Activated CD8-positive, alpha-beta T cell treated with anti-CD3 and anti-CD28 coated beads, Interleukin-2, amount 10 ng/mL, durations not matched to agents 7 days and 5 days (primary cell): ENCODE measurements at regions of chr1 and their contacts with region 1.

Region 1: DNA sequence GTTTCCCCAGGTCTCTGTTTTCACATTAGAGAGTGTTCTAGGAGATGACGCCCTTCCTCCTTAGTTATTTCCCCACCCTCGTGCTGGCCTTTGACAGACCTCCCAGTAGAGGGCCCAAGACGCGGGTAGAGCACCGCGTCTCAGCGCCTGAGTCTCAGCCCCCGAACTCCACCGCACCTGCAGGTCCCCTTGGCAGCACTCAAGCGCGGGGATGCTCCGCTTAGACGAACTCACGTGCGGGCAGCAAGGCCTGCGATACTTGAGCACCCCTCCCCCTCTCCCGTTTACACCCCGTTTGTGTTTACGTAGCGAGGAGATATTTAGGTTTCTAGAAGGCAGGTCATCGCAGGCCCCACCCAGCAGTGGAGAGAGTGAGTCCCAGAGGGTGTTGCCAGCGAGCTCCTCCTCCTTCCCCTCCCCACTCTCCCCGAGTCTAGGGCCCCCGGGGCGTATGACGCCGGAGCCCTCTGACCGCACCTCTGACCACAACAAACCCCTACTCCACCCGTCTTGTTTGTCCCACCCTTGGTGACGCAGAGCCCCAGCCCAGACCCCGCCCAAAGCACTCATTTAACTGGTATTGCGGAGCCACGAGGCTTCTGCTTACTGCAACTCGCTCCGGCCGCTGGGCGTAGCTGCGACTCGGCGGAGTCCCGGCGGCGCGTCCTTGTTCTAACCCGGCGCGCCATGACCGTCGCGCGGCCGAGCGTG is at the start of gene CD55:
- DNase-seq: peak; percentile 100
- ATAC-seq: peak; percentile 93
- H3K4me3 Mint-ChIP-seq: peak within 1 kb of the TSS; percentile 92
- H3K27ac Mint-ChIP-seq: peak within 1 kb of the TSS; percentile 99
- H3K4me1 Mint-ChIP-seq: peaks cover 29% of the 10 kb centered on the region
- H3K27me3 Mint-ChIP-seq: no peaks in the 10 kb centered on the region
- total RNA-seq, gene CD55: 82.1 to 85.5 TPM

Region 2: DNA sequence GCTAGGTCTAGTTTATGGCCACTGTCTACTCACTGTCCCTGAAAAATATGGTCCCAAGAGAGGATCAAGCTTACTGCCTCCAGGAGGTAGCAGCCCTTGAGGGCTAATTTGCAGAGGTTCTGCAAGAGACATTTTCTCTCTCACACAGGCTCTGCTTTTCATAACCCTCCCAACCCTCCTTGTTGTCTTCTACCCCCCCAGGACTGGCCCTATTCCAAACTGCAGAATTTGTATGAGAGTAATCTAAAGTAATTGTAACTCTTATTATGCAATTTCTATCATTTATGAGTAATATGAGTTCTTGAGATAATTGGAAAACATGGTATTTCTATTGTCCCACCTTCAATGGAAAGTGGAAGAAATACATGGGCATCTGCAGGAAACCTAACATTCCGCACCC is 70.2 kb before region 1 on chr1:
- CTCF ChIA-PET with region 1: no interaction called
- POLR2A ChIA-PET with region 1: no interaction called
- DNase-seq: no peak
- ATAC-seq: no peak
- H3K4me3 Mint-ChIP-seq: no peak overlapping the region
- H3K27ac Mint-ChIP-seq: no peak overlapping the region
- H3K4me1 Mint-ChIP-seq: peaks cover 10% of the 10 kb centered on the region
- H3K27me3 Mint-ChIP-seq: no peaks in the 10 kb centered on the region

Region 3: DNA sequence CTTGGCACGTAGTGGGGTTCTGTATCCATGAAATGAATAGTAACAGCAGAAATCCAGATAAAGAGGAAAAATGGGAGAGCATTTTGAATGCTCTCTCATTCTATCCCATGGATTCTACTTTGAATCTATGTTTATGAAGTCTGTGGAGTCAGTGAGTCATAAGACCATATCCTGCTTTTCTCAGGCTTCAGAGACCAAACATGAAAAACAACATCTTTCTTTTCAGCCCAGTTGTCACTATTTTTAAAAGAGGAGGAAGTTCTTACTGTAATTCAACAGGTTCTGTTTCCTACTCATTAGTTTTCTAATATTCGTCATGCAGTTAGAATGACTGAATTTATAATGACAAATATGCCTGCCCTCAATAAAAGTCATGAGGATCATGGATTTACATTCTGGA is 39.2 kb before region 1 on chr1:
- CTCF ChIA-PET with region 1: no interaction called
- POLR2A ChIA-PET with region 1: interaction called, 11 read pairs
- DNase-seq: no peak
- ATAC-seq: no peak
- H3K4me3 Mint-ChIP-seq: no peak overlapping the region
- H3K27ac Mint-ChIP-seq: peak overlapping the region; percentile 44
- H3K4me1 Mint-ChIP-seq: peaks cover 75% of the 10 kb centered on the region
- H3K27me3 Mint-ChIP-seq: no peaks in the 10 kb centered on the region

Region 4: DNA sequence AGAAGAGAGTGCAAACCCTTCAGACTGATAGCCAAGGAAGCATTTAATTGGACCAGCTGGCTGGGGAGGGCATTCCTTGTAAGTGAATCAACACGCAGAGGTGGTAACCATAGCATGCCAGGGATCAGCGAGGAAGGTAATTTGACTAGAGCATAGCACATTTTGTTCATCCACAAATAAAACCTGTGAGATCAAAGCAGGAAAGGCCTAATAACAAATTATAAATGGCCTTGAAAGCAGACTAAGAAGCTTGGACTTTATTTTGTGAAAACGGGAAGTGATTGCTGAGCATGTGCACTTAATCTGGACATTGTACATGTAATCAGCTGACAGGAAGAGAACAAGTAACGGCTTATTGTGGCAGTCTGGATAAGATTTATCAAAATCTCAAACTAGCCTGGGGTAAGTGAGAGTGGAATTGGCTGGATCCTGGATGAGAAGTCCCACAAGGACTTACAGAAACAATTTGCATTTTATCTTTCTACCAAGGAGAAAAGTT is 11.4 kb before region 1 on chr1:
- CTCF ChIA-PET with region 1: interaction called, 3 read pairs
- POLR2A ChIA-PET with region 1: interaction called, 11 read pairs
- DNase-seq: no peak
- ATAC-seq: no peak
- H3K4me3 Mint-ChIP-seq: peak overlapping the region; percentile 57
- H3K27ac Mint-ChIP-seq: peak overlapping the region; percentile 86
- H3K4me1 Mint-ChIP-seq: peaks cover 17% of the 10 kb centered on the region
- H3K27me3 Mint-ChIP-seq: no peaks in the 10 kb centered on the region

Region 5: DNA sequence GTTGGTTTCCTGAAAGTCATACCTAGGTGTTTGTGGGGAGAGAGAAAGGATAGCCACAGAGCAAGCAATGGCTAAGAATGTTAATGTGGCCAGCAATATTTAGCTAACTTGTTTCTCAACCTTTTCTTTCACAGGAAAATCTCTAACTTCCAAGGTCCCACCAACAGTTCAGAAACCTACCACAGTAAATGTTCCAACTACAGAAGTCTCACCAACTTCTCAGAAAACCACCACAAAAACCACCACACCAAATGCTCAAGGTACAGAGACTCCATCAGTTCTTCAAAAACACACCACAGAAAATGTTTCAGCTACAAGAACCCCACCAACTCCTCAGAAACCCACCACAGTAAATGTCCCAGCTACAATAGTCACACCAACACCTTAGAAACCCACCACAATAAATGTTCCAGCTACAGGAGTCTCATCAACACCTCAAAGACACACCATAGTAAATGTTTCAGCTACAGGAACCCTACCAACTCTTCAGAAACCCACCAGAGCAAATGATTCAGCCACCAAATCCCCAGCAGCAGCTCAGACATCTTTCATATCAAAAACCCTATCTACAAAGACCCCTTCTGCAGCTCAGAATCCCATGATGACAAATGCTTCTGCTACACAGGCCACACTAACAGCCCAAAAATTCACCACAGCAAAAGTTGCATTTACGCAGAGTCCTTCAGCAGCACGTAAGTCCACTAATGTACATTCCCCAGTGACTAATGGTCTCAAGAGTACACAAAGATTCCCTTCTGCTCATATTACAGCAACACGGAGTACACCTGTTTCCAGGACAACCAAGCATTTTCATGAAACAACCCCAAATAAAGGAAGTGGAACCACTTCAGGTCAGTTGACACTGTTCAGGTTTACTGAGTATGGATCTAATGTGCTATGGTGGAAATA is 15.6 kb after region 1 on chr1:
- CTCF ChIA-PET with region 1: interaction called, 46 read pairs
- POLR2A ChIA-PET with region 1: interaction called, 169 read pairs
- DNase-seq: peak; percentile 88
- ATAC-seq: peak; percentile 78
- H3K4me3 Mint-ChIP-seq: peak overlapping the region; percentile 51
- H3K27ac Mint-ChIP-seq: peak overlapping the region; percentile 93
- H3K4me1 Mint-ChIP-seq: peaks cover 71% of the 10 kb centered on the region
- H3K27me3 Mint-ChIP-seq: no peaks in the 10 kb centered on the region

Region 6: GRCh38 chr1:207362962-207363858 is 42.0 kb after region 1 on chr1:
- CTCF ChIA-PET with region 1: interaction called, 6 read pairs
- POLR2A ChIA-PET with region 1: interaction called, 13 read pairs
- DNase-seq: peak; percentile 32
- ATAC-seq: peak; percentile 93
- H3K4me3 Mint-ChIP-seq: no peak overlapping the region
- H3K27ac Mint-ChIP-seq: no peak overlapping the region
- H3K4me1 Mint-ChIP-seq: no peaks in the 10 kb centered on the region
- H3K27me3 Mint-ChIP-seq: no peaks in the 10 kb centered on the region

Region 7: DNA sequence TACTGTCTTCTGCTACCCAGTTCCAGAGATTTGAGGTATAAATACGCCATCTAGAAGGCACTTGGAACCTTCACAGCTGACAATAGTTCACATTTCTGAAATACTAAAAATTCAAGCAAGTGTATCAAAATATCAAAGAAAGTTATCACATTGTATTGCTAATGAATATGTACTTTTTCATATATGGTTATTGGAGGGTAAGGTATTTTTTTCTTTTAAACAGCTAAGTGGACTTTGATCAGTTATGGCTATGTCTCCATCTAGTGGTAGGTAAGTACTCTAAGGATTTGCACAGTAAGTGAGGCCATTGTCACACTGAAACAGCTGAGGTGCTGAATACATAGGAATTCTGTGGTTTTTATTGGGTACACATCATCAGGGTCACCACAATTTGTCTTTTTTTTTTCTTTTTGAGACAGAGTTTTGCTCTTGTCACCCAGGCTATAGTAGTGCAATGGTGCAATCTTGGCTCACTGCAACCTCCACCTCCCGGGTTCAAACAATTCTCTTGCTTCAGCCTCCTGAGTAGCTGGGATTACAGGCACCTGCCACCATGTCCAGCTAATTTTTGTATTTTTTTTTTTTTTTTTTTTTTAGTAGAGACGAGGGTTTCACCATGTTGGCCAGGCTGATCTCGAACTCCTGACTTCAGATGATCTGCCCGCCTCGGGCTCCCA is 83.8 kb after region 1 on chr1:
- CTCF ChIA-PET with region 1: interaction called, 43 read pairs
- POLR2A ChIA-PET with region 1: interaction called, 19 read pairs
- DNase-seq: no peak
- ATAC-seq: peak; percentile 86
- H3K4me3 Mint-ChIP-seq: no peak overlapping the region
- H3K27ac Mint-ChIP-seq: no peak overlapping the region
- H3K4me1 Mint-ChIP-seq: peaks cover 11% of the 10 kb centered on the region
- H3K27me3 Mint-ChIP-seq: peaks cover 3% of the 10 kb centered on the region